PC-3 (cell line): ENCODE measurements at regions of chr10 and their contacts with region 1.

Region 1: DNA sequence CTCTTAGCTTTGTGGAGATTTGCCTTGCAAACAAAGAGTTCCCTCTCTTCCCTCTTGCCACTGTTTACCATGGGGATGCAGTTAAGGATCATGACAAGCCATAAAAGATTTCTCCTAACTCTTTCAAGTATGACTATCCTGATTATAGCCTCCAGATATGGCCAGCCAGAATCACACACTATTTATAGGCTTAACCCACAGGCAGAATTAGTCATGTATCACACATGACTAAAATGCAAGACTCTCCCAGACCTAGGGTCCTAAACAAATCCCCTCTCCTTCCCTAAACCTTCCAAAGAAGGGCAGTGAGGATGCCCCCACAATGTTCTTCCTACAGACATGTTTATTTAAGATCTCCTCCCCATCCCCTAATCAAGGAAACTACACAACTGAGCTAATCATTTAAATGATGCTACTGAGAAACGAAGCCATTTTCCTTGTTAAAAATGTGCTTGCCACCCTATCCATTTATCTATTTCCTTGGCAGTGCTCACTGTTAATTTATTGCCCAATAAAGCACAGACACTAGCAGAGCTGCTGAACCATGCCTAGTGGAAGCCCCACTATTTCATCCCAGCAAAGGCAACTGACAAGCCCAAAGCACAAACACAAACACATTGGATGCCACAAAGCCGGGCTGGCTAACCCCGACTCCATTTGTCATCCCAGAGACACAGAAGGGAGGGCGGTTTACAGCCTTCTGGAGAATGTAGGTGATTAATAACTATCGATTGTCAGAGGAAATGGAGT is 363.4 kb downstream of the KCNMA1 start:
- DNase-seq: peak; percentile 100
- ATAC-seq: peak; percentile 96
- H3K4me3 ChIP-seq: no peak overlapping the region; the same call in 1 of the 2 replicates
- H3K27ac ChIP-seq: peak overlapping the region; percentile 74
- H3K4me1 ChIP-seq: peaks cover 28% of the 10 kb centered on the region
- H3K27me3 ChIP-seq: no peaks in the 10 kb centered on the region
- CTCF ChIP-seq: no peak

Region 2: GRCh38 chr10:77350711-77351119 is 76.5 kb after region 1 on chr10:
- CTCF ChIA-PET with region 1: no interaction called
- POLR2A ChIA-PET with region 1: no interaction called
- intact Hi-C with region 1: loop called (anchors 1 kb)
- DNase-seq: peak; percentile 100
- ATAC-seq: peak; percentile 96
- H3K4me3 ChIP-seq: 0 out of 2 replicates have a peak overlapping the region, but pooled peaks have one; percentile 0
- H3K27ac ChIP-seq: peak overlapping the region; percentile 77
- H3K4me1 ChIP-seq: peaks cover 52% of the 10 kb centered on the region
- H3K27me3 ChIP-seq: no peaks in the 10 kb centered on the region
- CTCF ChIP-seq: 0 out of 2 replicates have a peak, but pooled peaks have one; percentile 18